ENCODE measurements at regions of chr10 and their contacts with region 1.

Region 1: GRCh38 chr10:24209946-24210491 is 1.1 kb downstream of the KIAA1217 start:
- DNase-seq: peak; percentile 19
- H3K4me3 ChIP-seq: peak overlapping the region; percentile 48 to 56
- H3K27ac ChIP-seq: peak overlapping the region; percentile 90 to 91
- H3K4me1 ChIP-seq: peaks cover 12% of the 10 kb centered on the region
- H3K27me3 ChIP-seq: no peaks in the 10 kb centered on the region
- CTCF ChIP-seq: no peak
- POLR2A ChIP-seq: no peak

Region 2: GRCh38 chr10:24249829-24250415 is 39.9 kb after region 1 on chr10:
- intact Hi-C with region 1: no loop called
- DNase-seq: peak; percentile 36
- H3K4me3 ChIP-seq: no peak overlapping the region
- H3K27ac ChIP-seq: peak overlapping the region; percentile 8 to 62
- H3K4me1 ChIP-seq: peaks cover 18% of the 10 kb centered on the region
- H3K27me3 ChIP-seq: no peaks in the 10 kb centered on the region
- CTCF ChIP-seq: no peak
- POLR2A ChIP-seq: no peak

Region 3: DNA sequence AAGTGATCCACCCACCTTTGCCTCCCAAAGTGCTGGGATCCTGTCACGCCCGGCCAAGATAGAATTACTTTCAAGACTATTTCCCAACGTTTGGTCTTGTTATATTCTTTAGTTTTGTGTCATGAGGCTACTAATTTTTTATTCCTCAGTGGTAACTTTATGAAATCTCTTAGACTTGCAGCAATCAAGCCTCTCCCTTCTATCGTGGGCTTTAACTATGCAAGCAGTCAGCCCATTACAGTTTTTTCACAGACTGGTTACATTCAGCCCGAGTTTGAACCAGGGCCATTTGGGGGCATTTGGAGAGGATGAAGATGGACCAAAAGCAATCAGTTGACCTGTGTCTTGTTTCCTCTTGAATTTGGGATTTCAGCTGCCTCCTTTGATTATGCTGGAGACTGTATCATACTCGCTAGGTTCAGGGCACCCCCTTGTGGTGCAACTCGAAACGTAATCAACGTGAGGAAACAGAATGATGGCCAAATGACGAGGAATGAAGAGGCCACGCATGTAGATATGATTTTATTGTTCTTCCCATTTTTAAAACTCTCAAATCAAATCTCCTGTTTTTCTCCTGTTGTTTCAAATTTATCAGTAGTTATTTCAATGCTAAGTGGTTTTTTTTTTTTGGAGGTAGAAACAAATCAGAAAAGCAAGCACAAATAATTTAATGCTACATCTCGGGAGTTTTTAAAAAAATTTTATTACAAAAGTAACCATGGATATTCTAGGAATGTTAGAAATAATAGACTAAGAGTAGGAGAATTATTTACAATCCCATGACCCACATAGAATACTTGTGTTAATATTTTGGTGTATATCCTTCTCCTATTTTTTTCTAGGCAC is 150.5 kb after region 1 on chr10:
- intact Hi-C with region 1: loop called (anchors 5 kb)
- DNase-seq: peak; percentile 78
- H3K4me3 ChIP-seq: no peak overlapping the region
- H3K27ac ChIP-seq: peak overlapping the region in 1 of 2 donors; percentile 25
- H3K4me1 ChIP-seq: no peaks in the 10 kb centered on the region
- H3K27me3 ChIP-seq: no peaks in the 10 kb centered on the region
- CTCF ChIP-seq: peak; percentile 17 to 81 (median 73)
- POLR2A ChIP-seq: no peak

Region 4: DNA sequence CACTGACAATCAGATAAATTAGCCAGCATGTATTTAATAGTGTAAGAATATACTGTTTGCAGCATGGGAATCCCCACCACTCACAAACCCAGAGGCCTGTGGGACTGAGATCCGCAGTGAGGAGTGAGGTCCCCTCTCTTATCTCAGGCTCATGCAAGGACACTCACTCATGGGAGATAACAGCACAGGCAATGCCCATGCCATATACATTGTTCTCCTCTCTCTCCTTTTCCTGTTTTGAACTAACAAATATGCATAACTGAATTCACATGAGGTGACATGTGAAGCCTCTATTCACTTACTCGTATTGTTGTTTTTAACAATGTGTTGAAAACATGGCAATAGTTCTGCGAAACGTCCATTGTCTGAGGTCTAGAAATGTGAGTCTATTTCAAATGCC is 283.1 kb after region 1 on chr10:
- intact Hi-C with region 1: no loop called
- DNase-seq: no peak
- H3K4me3 ChIP-seq: no peak overlapping the region
- H3K27ac ChIP-seq: peak overlapping the region; percentile 79 to 80
- H3K4me1 ChIP-seq: peaks cover 8% of the 10 kb centered on the region
- H3K27me3 ChIP-seq: no peaks in the 10 kb centered on the region
- CTCF ChIP-seq: no peak
- POLR2A ChIP-seq: no peak

Region 5: GRCh38 chr10:24503461-24504320 is 293.7 kb after region 1 on chr10:
- intact Hi-C with region 1: loop called (anchors 10 kb)
- DNase-seq: peak; percentile 46
- H3K4me3 ChIP-seq: no peak overlapping the region
- H3K27ac ChIP-seq: peak overlapping the region; percentile 7
- H3K4me1 ChIP-seq: no peaks in the 10 kb centered on the region
- H3K27me3 ChIP-seq: no peaks in the 10 kb centered on the region
- CTCF ChIP-seq: peak; percentile 18 to 68 (median 61)
- POLR2A ChIP-seq: no peak